Activated CD4-positive, alpha-beta memory T cell treated with anti-CD3 and anti-CD28 coated beads, Interleukin-2, amount 10 ng/mL, durations not matched to agents 7 days and 5 days (primary cell): ENCODE measurements at regions of chr20 and their contacts with region 1.

Region 1: DNA sequence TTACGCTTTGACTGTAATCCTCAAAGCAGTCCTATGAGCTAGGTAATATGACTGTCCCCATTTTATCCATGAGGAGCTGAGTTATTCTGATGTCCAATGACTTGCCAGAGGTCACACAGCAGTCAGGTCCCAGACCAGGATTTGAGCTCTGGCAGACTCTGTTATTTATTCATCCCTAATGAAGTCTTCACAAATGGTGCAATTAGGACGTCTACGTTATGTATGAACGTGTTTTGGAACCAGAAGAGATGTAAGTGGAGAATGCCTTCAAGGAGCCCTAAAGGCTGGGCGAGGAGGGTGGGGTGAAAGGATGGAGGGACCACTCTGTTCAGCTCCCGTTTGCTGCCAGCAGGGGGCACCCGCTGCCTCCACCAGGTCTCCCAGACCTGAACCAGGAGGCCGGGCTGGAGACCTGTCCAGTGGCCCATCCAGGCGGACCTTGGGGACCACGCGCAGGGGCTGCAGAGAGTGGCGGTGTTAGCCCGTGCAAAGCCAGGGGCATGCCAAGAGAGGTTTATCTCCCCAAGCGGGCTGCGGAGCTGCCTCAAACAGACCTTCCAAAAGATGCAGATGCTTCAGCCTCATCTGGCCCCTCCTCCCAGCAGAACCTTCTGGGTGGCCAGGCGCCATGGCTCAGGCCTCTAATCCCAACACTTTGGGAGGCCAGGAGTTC is 15.2 kb upstream of the ZNF335 start:
- DNase-seq: peak; percentile 82
- H3K4me3 Mint-ChIP-seq: no peak overlapping the region
- H3K27ac Mint-ChIP-seq: no peak overlapping the region
- H3K4me1 Mint-ChIP-seq: peaks cover 15% of the 10 kb centered on the region
- H3K27me3 Mint-ChIP-seq: peaks cover 4% of the 10 kb centered on the region

Region 2: DNA sequence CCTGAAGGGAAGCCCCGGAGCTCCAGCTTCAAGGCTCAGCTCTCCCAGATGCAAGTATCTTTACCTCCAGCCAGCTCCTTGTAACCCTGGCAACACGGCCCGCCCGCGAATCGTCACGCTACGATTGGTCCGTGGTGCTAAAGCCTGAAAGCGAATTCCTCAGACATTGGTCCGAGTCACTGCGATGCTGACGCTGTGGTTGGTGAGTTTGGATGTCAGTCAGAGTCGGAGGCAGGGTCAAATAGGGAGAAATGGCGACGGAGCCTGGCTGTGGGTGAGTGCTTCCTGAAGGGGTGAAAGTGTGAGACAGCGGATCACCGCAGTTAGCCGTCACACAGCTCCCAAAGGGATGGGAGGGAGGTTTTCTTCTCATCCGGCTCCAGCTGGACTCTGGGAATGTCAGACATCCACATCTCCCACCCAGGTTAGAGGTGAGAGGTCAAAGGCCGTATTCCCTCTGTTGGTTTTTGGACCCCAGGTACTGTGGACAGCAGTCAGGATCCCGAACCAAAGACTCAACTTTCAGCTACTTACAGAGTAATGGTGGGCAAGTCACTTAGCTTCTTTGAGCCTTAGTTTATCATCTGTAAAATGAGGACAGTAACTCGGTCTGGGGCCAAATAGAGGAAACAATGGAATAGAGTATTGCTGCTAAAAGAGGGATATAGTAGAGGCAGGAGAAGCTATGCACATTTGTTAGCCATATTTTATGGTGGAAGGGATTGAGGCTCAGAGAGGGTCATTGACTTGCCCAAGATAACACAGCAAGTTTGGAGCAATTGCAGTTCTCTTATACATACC is 106.1 kb before region 1 on chr20 and contains the start of gene ZSWIM1:
- CTCF ChIA-PET with region 1: no interaction called
- POLR2A ChIA-PET with region 1: no interaction called
- DNase-seq: peak; percentile 98
- H3K4me3 Mint-ChIP-seq: peak within 1 kb of the TSS; percentile 72
- H3K27ac Mint-ChIP-seq: peak within 1 kb of the TSS; percentile 34
- H3K4me1 Mint-ChIP-seq: peaks cover 40% of the 10 kb centered on the region
- H3K27me3 Mint-ChIP-seq: peaks cover 13% of the 10 kb centered on the region
- total RNA-seq, gene ZSWIM1: 2.7 to 2.9 TPM

Region 3: DNA sequence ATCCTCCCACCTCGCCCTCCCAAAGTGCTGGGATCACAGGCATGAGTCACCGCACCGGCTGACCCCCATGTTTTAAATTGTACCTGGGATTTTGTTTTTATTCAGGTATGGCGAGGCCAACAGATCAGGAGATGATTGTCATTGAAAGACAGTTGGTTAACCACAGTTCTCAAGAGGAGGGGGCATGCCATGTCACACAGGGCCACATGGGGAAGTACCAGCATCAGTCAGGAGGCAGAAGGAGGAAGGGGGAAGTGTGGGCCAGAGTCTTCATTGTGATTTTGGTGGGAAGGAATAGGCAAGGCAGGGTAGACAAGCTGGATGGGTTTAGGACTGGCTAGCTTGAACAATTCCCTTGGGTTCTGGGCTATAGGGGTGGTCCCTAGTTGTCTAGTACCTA is 11.5 kb after region 1 on chr20:
- CTCF ChIA-PET with region 1: interaction called, 21 read pairs
- POLR2A ChIA-PET with region 1: no interaction called
- DNase-seq: no peak
- H3K4me3 Mint-ChIP-seq: no peak overlapping the region
- H3K27ac Mint-ChIP-seq: no peak overlapping the region
- H3K4me1 Mint-ChIP-seq: peaks cover 51% of the 10 kb centered on the region
- H3K27me3 Mint-ChIP-seq: peaks cover 17% of the 10 kb centered on the region

Region 4: GRCh38 chr20:46004889-46005473 is 17.7 kb after region 1 on chr20:
- CTCF ChIA-PET with region 1: interaction called, 135 read pairs
- POLR2A ChIA-PET with region 1: interaction called, 6 read pairs
- DNase-seq: peak; percentile 68
- H3K4me3 Mint-ChIP-seq: peak overlapping the region; percentile 40
- H3K27ac Mint-ChIP-seq: peak overlapping the region; percentile 68
- H3K4me1 Mint-ChIP-seq: peaks cover 69% of the 10 kb centered on the region
- H3K27me3 Mint-ChIP-seq: peaks cover 35% of the 10 kb centered on the region

Region 5: GRCh38 chr20:46013826-46014516 is 26.7 kb after region 1 on chr20:
- CTCF ChIA-PET with region 1: interaction called, 135 read pairs
- POLR2A ChIA-PET with region 1: interaction called, 3 read pairs
- DNase-seq: peak; percentile 73
- H3K4me3 Mint-ChIP-seq: peak overlapping the region; percentile 30
- H3K27ac Mint-ChIP-seq: no peak overlapping the region
- H3K4me1 Mint-ChIP-seq: peaks cover 56% of the 10 kb centered on the region
- H3K27me3 Mint-ChIP-seq: peaks cover 68% of the 10 kb centered on the region

Region 6: GRCh38 chr20:46089417-46090388 is 102.5 kb after region 1 on chr20 and contains the start of gene NCOA5:
- CTCF ChIA-PET with region 1: interaction called, 20 read pairs
- POLR2A ChIA-PET with region 1: interaction called, 3 read pairs
- DNase-seq: peak; percentile 96
- H3K4me3 Mint-ChIP-seq: peak within 1 kb of the TSS; percentile 84
- H3K27ac Mint-ChIP-seq: peak within 1 kb of the TSS; percentile 82
- H3K4me1 Mint-ChIP-seq: peaks cover 35% of the 10 kb centered on the region
- H3K27me3 Mint-ChIP-seq: no peaks in the 10 kb centered on the region
- total RNA-seq, gene NCOA5: 24.6 to 26.3 TPM

Region 7: GRCh38 chr20:46894971-46895905 is 908.0 kb after region 1 on chr20:
- CTCF ChIA-PET with region 1: no interaction called
- POLR2A ChIA-PET with region 1: no interaction called
- DNase-seq: no peak
- H3K4me3 Mint-ChIP-seq: no peak overlapping the region
- H3K27ac Mint-ChIP-seq: no peak overlapping the region
- H3K4me1 Mint-ChIP-seq: no peaks in the 10 kb centered on the region
- H3K27me3 Mint-ChIP-seq: peaks cover 80% of the 10 kb centered on the region